ENCODE measurements at regions of chr17 and their contacts with region 1.

Region 1: DNA sequence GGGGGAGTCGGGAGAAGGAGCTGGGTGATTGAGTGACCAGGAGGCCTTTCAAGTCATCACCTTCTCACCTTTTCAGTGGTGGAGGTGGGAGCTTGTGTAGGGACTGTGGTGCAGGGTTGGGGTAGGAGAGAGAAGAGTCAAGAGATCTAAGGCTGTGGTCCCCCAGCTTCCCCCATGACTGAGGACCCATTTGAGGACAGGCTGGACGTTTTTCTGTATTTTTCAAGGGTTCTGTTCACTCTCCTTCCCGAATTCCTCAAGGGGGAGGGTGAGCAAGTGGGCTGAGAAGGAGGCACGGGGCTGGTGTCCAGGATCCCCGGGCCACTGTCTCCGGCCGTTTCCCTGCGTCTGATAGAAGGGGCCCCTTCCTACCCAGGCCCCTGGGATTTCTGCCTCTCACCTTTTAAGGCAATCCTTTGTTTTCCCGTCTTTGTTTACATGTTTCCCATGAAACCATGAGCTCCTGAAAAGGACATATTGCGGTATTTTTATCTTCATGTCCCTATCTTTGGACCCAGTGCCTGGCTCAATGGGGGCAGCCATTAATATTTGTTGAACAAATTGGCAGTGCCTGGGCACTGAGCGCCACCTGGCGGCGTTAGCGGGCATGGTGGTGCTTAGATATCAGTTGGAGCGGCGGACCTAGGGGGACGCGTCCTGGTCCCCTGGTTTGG is 9.2 kb upstream of the CD300A start:
- DNase-seq: peak; percentile 17
- H3K4me3 ChIP-seq: no peak overlapping the region
- H3K27ac ChIP-seq: no peak overlapping the region
- H3K4me1 ChIP-seq: peaks cover 9% of the 10 kb centered on the region
- H3K27me3 ChIP-seq: no peaks in the 10 kb centered on the region
- CTCF ChIP-seq: peak; percentile 84 to 92

Region 2: DNA sequence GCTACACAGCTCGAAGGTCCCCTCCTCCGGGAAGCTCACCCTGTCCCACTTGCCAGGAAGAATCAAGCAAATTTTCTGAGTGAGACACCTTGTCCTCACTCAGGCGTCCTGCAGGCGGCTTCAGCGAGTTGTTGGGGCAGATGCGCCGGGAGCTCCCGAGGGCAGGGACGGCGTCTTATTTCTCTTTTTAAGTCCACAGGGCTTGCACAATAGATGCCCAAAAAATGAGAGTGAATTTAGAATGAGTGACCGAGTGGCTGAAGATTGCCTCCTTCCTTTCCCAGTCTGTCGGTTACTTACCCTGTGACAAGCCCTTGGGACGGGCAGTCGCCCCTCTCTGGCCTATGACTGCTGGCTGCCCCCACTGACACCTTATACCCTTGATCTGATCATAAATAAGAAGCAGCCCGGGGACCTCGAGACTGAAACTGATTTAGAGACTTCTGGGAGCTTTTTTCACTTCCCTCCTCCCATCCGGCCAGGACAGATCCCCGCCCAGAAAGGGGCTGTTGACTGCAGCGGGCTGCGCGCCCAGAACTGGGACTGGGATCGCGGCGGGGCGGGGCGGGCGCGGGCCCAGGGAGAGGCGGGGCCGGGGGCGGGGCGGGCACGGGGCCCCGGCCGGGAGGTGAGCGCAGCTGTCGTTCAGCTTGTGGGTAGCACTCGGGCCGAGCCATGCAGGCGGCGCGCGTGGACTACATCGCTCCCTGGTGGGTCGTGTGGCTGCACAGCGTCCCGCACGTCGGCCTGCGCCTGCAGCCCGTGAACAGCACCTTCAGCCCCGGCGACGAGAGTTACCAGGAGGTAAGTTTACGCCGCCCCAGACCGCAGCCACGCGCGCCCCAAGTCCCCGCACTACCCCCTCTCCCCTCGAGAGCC is 244.1 kb before region 1 on chr17 and contains the start of gene TTYH2:
- CTCF ChIA-PET with region 1: no interaction called
- dilution Hi-C with region 1: no loop called
- in situ Hi-C with region 1: no loop called
- intact Hi-C with region 1: loop called (anchors 1 kb)
- DNase-seq: peak; percentile 73
- H3K4me3 ChIP-seq: peak within 1 kb of the TSS; percentile 55 to 66 (median 64)
- H3K27ac ChIP-seq: peak within 1 kb of the TSS; percentile 42
- H3K4me1 ChIP-seq: peaks cover 43% of the 10 kb centered on the region
- H3K27me3 ChIP-seq: no peaks in the 10 kb centered on the region
- CTCF ChIP-seq: peak; percentile 9 to 56
- total RNA-seq, gene TTYH2: 0.49 to 0.67 TPM

Region 3: DNA sequence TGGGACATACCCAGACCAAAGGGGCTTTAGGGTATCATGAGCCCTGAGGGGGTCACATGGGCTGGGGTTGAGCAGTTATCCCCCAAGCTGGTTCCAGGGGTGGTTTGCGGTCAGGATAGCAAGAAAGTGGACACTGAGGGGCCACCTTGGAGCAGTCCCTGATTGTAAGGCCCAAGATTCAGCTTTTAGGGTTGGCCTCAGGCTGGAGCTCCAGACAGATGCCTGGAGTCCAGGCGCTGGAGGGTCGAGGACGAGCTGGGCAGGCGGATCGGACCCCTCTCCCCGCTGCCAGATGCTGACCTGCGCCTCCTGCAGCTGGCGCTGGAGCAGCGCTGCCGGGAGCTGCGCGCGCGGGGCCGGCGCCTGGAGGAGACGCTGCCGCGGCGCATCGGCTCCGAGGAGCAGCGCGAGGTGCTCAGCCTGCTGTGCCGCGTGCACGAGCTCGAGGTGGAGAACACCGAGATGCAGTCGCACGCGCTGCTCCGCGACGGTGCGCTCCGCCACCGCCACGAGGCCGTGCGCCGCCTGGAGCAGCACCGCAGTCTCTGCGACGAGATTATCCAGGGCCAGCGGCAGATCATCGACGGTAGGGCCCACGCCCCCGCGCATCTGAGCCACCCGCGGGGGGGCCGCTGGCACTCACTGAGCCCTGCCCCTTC is 105.6 kb before region 1 on chr17:
- CTCF ChIA-PET with region 1: no interaction called
- dilution Hi-C with region 1: no loop called
- in situ Hi-C with region 1: no loop called
- intact Hi-C with region 1: no loop called
- DNase-seq: no peak
- H3K4me3 ChIP-seq: no peak overlapping the region
- H3K27ac ChIP-seq: no peak overlapping the region
- H3K4me1 ChIP-seq: no peaks in the 10 kb centered on the region
- H3K27me3 ChIP-seq: peaks cover 3% of the 10 kb centered on the region
- CTCF ChIP-seq: no peak

Region 4: GRCh38 chr17:74379495-74380085 is 77.7 kb before region 1 on chr17:
- CTCF ChIA-PET with region 1: interaction called, 11 read pairs
- dilution Hi-C with region 1: no loop called
- in situ Hi-C with region 1: no loop called
- intact Hi-C with region 1: loop called (anchors 1 kb)
- DNase-seq: peak; percentile 58
- H3K4me3 ChIP-seq: no peak overlapping the region
- H3K27ac ChIP-seq: no peak overlapping the region
- H3K4me1 ChIP-seq: peaks cover 10% of the 10 kb centered on the region
- H3K27me3 ChIP-seq: no peaks in the 10 kb centered on the region
- CTCF ChIP-seq: peak; percentile 56 to 93

Region 5: GRCh38 chr17:74493381-74493833 is 36.1 kb after region 1 on chr17:
- CTCF ChIA-PET with region 1: no interaction called
- dilution Hi-C with region 1: no loop called
- in situ Hi-C with region 1: no loop called
- intact Hi-C with region 1: loop called (anchors 2 kb)
- DNase-seq: peak; percentile 37
- H3K4me3 ChIP-seq: no peak overlapping the region
- H3K27ac ChIP-seq: no peak overlapping the region
- H3K4me1 ChIP-seq: no peaks in the 10 kb centered on the region
- H3K27me3 ChIP-seq: no peaks in the 10 kb centered on the region
- CTCF ChIP-seq: peak; percentile 91 to 93

Measured in mammary epithelial cell (primary cell).